PC-3 (cell line): ENCODE measurements at regions of chr14 and their contacts with region 1.

Region 1: DNA sequence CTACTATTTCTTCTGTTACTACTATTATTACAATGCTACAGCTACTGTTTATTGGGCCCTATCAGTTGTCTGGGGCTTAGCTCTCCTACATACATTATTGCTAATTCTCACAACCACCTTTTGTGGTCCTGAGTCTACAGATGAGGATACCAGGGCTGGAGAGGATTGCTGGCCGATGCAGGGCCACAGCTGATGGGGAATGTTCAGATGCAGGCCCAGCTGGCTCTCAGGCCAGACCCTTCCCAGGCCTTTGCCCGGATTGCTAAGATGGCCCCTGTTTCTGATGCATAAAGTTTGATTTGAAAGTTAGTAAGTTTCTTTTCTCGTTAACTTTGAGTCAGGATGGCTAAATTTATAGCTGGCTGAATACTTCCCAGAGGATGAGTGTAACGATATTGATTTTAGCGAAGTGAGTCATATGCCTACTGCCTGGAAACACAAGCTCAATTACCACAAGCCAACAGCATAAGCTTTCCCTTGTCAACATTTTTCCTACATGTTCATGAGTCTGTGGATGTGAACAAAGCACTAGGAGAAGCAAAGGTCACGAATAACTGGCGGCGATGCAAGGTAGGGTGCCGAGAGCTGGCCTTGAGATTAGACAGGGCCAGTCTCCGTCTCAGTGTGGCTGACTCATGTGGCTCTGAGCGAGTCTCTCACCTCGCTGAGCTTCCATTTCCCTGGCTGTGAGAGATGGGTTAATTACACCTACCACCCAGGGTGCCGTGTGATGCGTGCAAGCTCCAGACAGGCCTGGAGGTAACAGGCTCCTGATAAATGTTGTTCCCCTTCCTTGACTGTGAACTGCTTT is 111.0 kb downstream of the BEGAIN start:
- DNase-seq: peak; percentile 97
- ATAC-seq: peak; percentile 95
- H3K4me3 ChIP-seq: peak overlapping the region; percentile 49
- H3K27ac ChIP-seq: peak overlapping the region; percentile 99
- H3K4me1 ChIP-seq: peaks cover 37% of the 10 kb centered on the region
- H3K27me3 ChIP-seq: no peaks in the 10 kb centered on the region
- CTCF ChIP-seq: no peak

Region 2: GRCh38 chr14:100547633-100548294 is 71.5 kb after region 1 on chr14:
- CTCF ChIA-PET with region 1: no interaction called
- POLR2A ChIA-PET with region 1: interaction called, 4 read pairs
- intact Hi-C with region 1: loop called (anchors 5 kb)
- DNase-seq: peak; percentile 97
- ATAC-seq: peak; percentile 88
- H3K4me3 ChIP-seq: no peak overlapping the region
- H3K27ac ChIP-seq: peak overlapping the region; percentile 53
- H3K4me1 ChIP-seq: peaks cover 25% of the 10 kb centered on the region
- H3K27me3 ChIP-seq: no peaks in the 10 kb centered on the region
- CTCF ChIP-seq: no peak

Region 3: GRCh38 chr14:100558966-100559365 is 82.7 kb after region 1 on chr14:
- CTCF ChIA-PET with region 1: interaction called, 13 read pairs
- POLR2A ChIA-PET with region 1: no interaction called
- intact Hi-C with region 1: no loop called
- DNase-seq: no peak
- ATAC-seq: no peak
- H3K4me3 ChIP-seq: no peak overlapping the region
- H3K27ac ChIP-seq: no peak overlapping the region
- H3K4me1 ChIP-seq: no peaks in the 10 kb centered on the region
- H3K27me3 ChIP-seq: no peaks in the 10 kb centered on the region
- CTCF ChIP-seq: no peak

Region 4: GRCh38 chr14:100914546-100915021 is 438.4 kb after region 1 on chr14:
- CTCF ChIA-PET with region 1: no interaction called
- POLR2A ChIA-PET with region 1: no interaction called
- intact Hi-C with region 1: no loop called
- DNase-seq: peak; percentile 75
- ATAC-seq: peak; percentile 83
- H3K4me3 ChIP-seq: peak overlapping the region; percentile 13; the same call in 1 of the 2 replicates
- H3K27ac ChIP-seq: peak overlapping the region; percentile 62
- H3K4me1 ChIP-seq: peaks cover 28% of the 10 kb centered on the region
- H3K27me3 ChIP-seq: no peaks in the 10 kb centered on the region
- CTCF ChIP-seq: no peak